Esophagus muscularis mucosa (tissue), 4 donors: ENCODE measurements at regions of chr5 and their contacts with region 1.

Region 1: GRCh38 chr5:172559004-172559932 is 81.8 kb upstream of the NEURL1B start:
- DNase-seq: peak; percentile 95
- H3K4me3 ChIP-seq: peak overlapping the region; percentile 30 to 54 (median 34)
- H3K27ac ChIP-seq: peak overlapping the region; percentile 82 to 91 (median 88)
- H3K4me1 ChIP-seq: peaks cover 42 to 66% (median 57%) of the 10 kb centered on the region in 4 donors
- H3K27me3 ChIP-seq: no peaks in the 10 kb centered on the region
- CTCF ChIP-seq: no peak
- EP300 ChIP-seq: no peak
- POLR2A ChIP-seq: no peak

Region 2: DNA sequence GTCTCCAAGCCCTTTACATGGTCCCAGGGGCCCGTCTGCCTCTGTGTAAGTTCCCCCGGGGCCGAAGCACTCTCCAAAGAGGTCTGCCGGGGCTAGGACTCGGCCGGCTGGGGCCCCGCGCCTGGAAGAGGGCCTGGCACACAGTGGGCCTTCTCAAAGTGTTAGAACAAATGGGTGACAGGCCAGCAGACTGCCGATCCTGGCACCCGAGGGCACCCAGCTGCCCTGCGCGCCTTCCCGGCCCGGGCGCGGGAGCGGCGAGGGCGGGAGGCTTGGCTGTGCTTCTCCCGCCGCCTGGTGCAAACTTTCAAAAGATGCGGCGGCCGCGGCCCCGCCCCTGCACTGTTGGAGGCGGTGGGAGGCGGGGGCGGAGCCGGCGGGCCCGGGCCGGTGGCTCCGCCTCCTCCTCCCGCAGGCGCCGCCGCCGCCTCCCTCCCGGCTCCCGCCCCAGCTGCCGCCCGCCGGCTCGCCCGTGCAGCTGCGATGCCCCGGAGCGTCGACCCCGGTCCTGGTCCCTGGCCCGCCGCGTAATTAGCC is 81.6 kb after region 1 on chr5 and contains the start of gene NEURL1B:
- intact Hi-C with region 1: loop called (anchors 10 kb)
- DNase-seq: no peak
- H3K4me3 ChIP-seq: peak within 1 kb of the TSS; percentile 68 to 98 (median 92)
- H3K27ac ChIP-seq: peak within 1 kb of the TSS; percentile 83 to 96 (median 94)
- H3K4me1 ChIP-seq: peaks cover 16 to 72% (median 65%) of the 10 kb centered on the region in 4 donors
- H3K27me3 ChIP-seq: no peaks in the 10 kb centered on the region
- CTCF ChIP-seq: peak in 2 of 3 experiments; percentile 21 to 43
- EP300 ChIP-seq: no peak
- POLR2A ChIP-seq: no peak
- total RNA-seq, gene NEURL1B: 34.1 to 87.1 (median 60.2) TPM

Region 3: GRCh38 chr5:172690258-172691075 is 131.2 kb after region 1 on chr5:
- intact Hi-C with region 1: loop called (anchors 5 kb)
- DNase-seq: no peak
- H3K4me3 ChIP-seq: no peak overlapping the region
- H3K27ac ChIP-seq: peak overlapping the region; percentile 68 to 76 (median 70)
- H3K4me1 ChIP-seq: peaks cover 66 to 91% (median 83%) of the 10 kb centered on the region in 4 donors
- H3K27me3 ChIP-seq: no peaks in the 10 kb centered on the region
- CTCF ChIP-seq: no peak
- EP300 ChIP-seq: no peak
- POLR2A ChIP-seq: no peak